ENCODE measurements at regions of chr7 and their contacts with region 1.

Region 1: DNA sequence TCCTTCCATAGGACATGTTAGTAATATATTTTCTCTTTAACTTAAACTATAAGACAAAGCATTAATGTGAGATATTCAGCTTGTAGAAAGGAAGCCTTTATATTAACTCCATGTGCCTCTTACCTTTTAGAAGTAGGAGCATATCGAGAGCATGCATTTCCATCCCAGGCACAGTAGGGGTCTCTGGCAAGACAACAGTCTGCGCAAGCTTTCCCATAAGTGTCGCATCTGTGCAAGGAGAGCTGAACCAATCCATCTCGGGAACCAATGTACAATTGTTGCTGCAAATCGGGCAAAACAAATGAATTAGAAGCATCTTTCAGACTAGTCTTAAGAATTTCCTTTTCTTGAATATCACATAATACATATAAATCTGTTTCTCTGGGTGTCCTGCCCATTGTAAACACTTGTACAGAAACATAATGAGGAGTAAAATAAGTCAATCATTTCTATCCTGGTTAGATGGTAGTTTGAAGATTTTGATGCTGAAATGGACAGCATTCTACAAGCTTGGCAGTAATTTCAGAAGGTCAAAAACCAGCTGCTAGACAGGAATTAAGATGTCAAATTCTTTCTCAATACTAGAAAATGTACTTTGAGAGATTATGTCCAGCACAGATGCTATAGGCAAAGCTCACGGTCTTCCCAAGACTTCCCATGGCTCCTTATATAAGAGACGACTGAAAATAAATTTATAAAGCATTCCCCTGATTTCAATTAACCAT is 171.8 kb downstream of the SEMA3D start:
- DNase-seq: no peak
- ATAC-seq: no peak
- H3K4me3 ChIP-seq: no peak overlapping the region
- H3K27ac ChIP-seq: no peak overlapping the region
- H3K4me1 ChIP-seq: no peaks in the 10 kb centered on the region
- H3K27me3 ChIP-seq: no peaks in the 10 kb centered on the region
- CTCF ChIP-seq: no peak

Region 2: GRCh38 chr7:84331616-84332015 is 683.5 kb before region 1 on chr7:
- intact Hi-C with region 1: loop called in 1 of 2 experiments (anchors 5 kb)
- DNase-seq: no peak
- ATAC-seq: no peak
- H3K4me3 ChIP-seq: no peak overlapping the region
- H3K27ac ChIP-seq: no peak overlapping the region
- H3K4me1 ChIP-seq: no peaks in the 10 kb centered on the region
- H3K27me3 ChIP-seq: no peaks in the 10 kb centered on the region
- CTCF ChIP-seq: no peak

Region 3: GRCh38 chr7:84490661-84491060 is 524.4 kb before region 1 on chr7:
- intact Hi-C with region 1: loop called in 1 of 2 experiments (anchors 10 kb)
- DNase-seq: no peak
- ATAC-seq: peak in 2 of 4 donors; percentile 40
- H3K4me3 ChIP-seq: no peak overlapping the region
- H3K27ac ChIP-seq: no peak overlapping the region
- H3K4me1 ChIP-seq: no peaks in the 10 kb centered on the region
- H3K27me3 ChIP-seq: peaks cover 0 to 2% (median 0%) of the 10 kb centered on the region in 3 donors
- CTCF ChIP-seq: peak; percentile 9

Region 4: DNA sequence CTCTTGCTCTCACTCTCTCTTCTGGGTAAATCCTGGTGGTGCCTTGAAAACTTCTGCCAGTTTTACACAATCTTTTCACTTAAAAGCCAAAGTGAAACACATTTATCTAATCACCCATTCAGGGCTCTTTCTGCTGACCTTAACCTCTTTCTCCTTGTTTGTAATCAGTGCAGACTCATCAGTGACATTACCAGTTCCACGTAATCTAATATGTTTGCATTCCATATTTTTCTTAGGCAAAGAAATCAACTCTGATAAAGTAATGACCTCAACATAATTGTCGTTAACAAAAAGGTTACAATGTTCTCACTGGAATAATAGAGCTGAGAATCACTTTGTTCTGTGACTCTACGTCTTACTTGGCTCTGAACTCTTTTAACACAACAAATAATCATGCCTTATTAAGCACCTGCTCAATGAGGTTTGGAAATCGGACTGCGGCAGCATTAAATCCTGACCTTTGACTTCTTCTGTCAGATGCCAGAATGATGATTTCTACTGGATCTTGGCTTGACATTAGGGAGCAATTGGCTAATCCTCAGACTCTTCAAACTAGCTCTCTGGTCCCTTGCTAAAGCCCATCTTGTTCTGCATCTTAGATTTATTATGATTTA is 62.0 kb before region 1 on chr7:
- intact Hi-C with region 1: no loop called
- DNase-seq: no peak
- ATAC-seq: no peak
- H3K4me3 ChIP-seq: no peak overlapping the region
- H3K27ac ChIP-seq: no peak overlapping the region
- H3K4me1 ChIP-seq: no peaks in the 10 kb centered on the region
- H3K27me3 ChIP-seq: no peaks in the 10 kb centered on the region
- CTCF ChIP-seq: no peak